Lower lobe of right lung (tissue), 2 donors: ENCODE measurements at regions of chr2 and their contacts with region 1.

Region 1: DNA sequence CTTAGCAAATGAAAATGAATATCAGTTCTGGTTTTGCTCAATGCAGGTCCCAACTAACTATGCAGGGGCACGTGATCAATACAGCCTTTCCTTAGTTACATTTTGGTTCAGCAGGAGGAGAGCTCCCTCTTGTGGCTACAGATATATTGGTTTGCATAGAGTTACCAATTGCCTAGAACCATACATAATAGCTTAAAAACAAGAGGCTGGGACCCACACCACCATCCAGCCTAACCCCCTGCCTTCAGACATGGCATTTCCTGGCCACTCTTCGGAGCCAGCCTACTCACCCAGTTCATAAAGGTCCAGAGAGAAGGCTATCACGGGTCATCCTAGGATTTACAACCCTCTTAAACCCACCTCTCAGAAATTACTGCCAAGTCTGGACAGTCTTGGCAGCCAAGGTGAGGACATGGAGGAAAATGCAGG is 10.5 kb downstream of the CCDC93 start:
- DNase-seq: no peak
- ATAC-seq: peak; percentile 95 to 96
- H3K4me3 ChIP-seq: no peak overlapping the region
- H3K27ac ChIP-seq: no peak overlapping the region
- H3K4me1 ChIP-seq: no peaks in the 10 kb centered on the region
- H3K27me3 ChIP-seq: no peaks in the 10 kb centered on the region
- CTCF ChIP-seq: peak; percentile 80

Region 2: DNA sequence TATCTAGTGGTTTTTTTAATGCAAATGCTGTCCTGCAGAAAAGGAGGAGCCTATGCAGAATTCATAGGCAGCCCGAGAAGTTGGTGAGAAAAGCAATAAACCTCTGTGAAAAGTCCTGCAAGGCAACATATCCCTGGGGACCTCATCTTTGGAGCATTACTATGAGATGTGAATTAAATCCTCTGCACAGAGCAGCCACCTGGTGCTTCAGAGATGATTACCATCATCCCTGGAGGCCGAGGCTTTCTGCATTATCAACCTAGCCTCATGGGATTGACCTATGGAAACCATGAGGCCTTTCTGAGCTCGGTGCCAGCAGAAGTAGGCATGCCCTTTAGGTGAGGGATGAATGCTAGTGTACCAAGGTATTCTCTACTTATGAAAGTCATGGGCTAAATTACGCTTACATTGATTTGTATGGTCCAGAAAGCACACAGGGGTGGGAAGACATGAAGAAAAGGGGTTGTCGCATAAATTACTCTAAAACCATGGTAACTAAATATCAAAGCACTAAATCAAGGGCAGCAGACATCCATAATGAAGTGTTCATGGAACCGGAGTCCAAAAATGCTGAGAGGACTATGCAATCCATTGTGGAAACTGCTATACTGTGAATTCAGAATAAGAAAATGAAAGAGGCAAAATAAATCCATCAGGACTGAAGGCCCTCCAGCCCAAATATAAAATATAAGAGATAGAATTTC is 812.4 kb before region 1 on chr2:
- intact Hi-C with region 1: no loop called
- DNase-seq: no peak
- ATAC-seq: no peak
- H3K4me3 ChIP-seq: no peak overlapping the region
- H3K27ac ChIP-seq: no peak overlapping the region
- H3K4me1 ChIP-seq: no peaks in the 10 kb centered on the region
- H3K27me3 ChIP-seq: no peaks in the 10 kb centered on the region
- CTCF ChIP-seq: no peak

Region 3: DNA sequence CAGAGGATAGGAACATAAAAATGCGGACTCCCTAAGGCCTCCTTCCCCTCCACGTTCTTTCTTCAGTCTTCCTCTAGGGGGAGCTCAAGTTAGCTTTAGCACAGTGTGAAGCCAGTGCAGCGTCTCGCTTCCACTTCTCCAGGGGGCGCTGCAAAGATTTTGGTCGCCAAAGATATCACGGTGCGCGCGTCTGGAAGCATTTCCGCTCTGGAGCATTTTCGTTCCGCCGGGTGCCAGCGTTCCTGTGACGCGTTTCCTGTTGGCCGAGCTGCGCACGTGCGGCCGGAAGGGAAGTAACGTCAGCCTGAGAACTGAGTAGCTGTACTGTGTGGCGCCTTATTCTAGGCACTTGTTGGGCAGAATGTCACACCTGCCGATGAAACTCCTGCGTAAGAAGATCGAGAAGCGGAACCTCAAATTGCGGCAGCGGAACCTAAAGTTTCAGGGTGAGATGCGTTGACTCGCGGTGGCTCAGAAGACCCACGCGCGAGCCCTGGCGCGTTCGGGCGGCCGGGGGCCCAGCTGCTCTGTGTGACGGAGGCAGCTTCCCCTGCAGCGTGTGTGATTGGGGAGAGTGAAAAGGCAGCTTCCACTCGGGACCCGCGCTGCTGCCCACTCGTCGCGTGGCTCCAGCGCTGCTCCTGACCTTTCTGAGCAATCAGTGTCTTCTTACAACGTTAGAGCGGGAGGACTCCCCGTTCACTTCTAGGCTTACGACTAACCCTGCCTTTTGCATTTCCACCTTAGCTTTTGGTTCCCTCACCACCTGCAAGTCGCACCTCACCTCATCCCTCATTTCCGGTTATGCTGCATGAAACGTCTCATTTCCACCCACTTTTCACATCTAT is 188.8 kb before region 1 on chr2 and contains the start of gene DDX18:
- intact Hi-C with region 1: loop called (anchors 10 kb)
- DNase-seq: peak; percentile 98
- ATAC-seq: peak; percentile 99
- H3K4me3 ChIP-seq: peak within 1 kb of the TSS; percentile 90
- H3K27ac ChIP-seq: peak within 1 kb of the TSS; percentile 93
- H3K4me1 ChIP-seq: peaks cover 25% of the 10 kb centered on the region
- H3K27me3 ChIP-seq: no peaks in the 10 kb centered on the region
- CTCF ChIP-seq: peak; percentile 98
- total RNA-seq, gene DDX18: 48.0 TPM

Region 4: DNA sequence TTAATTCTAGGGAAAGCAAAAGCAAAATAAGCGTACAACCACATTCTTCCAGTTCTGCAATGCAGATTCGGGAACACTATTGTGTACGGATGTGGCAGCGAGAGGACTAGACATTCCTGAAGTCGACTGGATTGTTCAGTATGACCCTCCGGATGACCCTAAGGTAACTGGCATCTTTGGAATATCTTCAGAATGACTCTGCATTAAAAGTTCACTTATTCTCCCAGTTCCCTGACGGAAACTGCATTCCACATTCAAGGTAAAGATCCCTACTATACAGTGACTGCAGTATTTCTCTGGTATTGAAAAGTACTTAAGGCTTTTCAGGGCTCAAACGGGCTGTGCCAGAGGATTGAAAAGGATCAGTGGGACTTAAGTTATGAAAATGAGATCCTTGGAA is 178.0 kb before region 1 on chr2:
- intact Hi-C with region 1: no loop called
- DNase-seq: no peak
- ATAC-seq: no peak
- H3K4me3 ChIP-seq: no peak overlapping the region
- H3K27ac ChIP-seq: no peak overlapping the region
- H3K4me1 ChIP-seq: no peaks in the 10 kb centered on the region
- H3K27me3 ChIP-seq: no peaks in the 10 kb centered on the region
- CTCF ChIP-seq: no peak

Region 5: GRCh38 chr2:118197011-118197675 is 193.7 kb after region 1 on chr2:
- intact Hi-C with region 1: no loop called
- DNase-seq: no peak
- ATAC-seq: no peak
- H3K4me3 ChIP-seq: no peak overlapping the region
- H3K27ac ChIP-seq: no peak overlapping the region
- H3K4me1 ChIP-seq: no peaks in the 10 kb centered on the region
- H3K27me3 ChIP-seq: no peaks in the 10 kb centered on the region
- CTCF ChIP-seq: no peak